ENCODE measurements at regions of chr17 and their contacts with region 1.

Region 1: GRCh38 chr17:45385331-45385997 is 47.2 kb downstream of the ARHGAP27 start:
- DNase-seq: peak; percentile 75 to 89
- H3K4me3 ChIP-seq: no peak overlapping the region
- H3K27ac ChIP-seq: no peak overlapping the region
- H3K4me1 ChIP-seq: peaks cover 0 to 7% (median 4%) of the 10 kb centered on the region in 4 donors
- H3K27me3 ChIP-seq: peaks cover 0 to 29% of the 10 kb centered on the region in 2 donors
- CTCF ChIP-seq: peak; percentile 97 to 98

Region 2: DNA sequence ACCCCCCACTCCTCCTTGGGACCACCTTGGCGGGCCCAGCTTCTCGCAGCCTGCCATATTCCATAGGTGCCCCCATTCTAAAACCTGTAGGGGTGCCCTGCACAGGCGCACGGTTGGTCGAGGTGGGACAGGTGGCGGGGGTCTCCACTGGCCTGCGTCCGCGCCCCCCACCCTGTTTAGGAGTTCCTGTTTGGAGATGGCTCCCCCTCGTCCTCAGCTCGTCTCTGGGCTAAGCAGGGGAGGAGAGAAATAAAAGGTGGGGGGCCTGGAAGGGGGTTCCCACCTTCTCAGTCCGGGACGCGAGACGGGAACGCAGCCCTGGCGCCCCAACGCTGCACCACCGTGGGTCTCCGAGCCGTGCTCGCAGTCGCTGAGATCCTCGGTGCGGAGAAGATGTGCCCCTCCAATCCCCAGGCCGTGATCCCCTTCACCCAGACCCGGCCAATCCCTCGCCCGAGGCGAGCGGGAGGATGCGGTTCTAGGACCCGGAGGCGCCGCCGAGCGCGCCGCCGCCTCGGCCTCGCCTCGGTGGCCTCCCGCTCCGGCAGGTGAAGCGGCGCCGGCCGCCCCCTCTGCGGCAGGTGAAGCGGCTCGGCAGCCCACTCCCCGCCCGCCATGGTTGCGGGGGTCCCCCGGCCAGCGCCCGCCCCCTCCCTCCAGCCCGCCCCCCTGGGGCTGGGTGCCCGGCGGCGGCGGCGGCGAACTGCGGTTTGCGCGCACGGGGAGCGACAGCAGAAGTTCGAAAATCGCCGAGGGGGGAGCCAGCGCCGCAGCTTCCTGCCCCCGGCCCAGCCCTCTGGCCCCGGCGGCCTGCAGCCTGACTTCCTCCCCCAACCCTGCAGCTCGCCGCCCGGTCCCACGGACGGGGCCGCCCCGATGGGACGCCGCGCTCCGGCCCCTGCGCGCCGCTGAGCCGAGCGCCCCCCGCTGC is 164.1 kb before region 1 on chr17 and contains the start of gene FMNL1:
- intact Hi-C with region 1: loop called (anchors 2 kb)
- DNase-seq: peak; percentile 42 to 76
- H3K4me3 ChIP-seq: peak within 1 kb of the TSS; percentile 36 to 59
- H3K27ac ChIP-seq: no peak within 1 kb of the TSS
- H3K4me1 ChIP-seq: peaks cover 0 to 19% (median 15%) of the 10 kb centered on the region in 4 donors
- H3K27me3 ChIP-seq: peaks cover 0 to 43% of the 10 kb centered on the region in 2 donors
- CTCF ChIP-seq: no peak

Region 3: GRCh38 chr17:45277992-45278391 is 107.5 kb before region 1 on chr17:
- intact Hi-C with region 1: loop called (anchors 2 kb)
- DNase-seq: no peak
- H3K4me3 ChIP-seq: no peak overlapping the region
- H3K27ac ChIP-seq: peak overlapping the region in 1 of 2 donors; percentile 18
- H3K4me1 ChIP-seq: peaks cover 3 to 16% (median 12%) of the 10 kb centered on the region in 4 donors
- H3K27me3 ChIP-seq: no peaks in the 10 kb centered on the region
- CTCF ChIP-seq: no peak